Activated CD4-positive, alpha-beta T cell treated with anti-CD3 and anti-CD28 coated beads, Interleukin-2, amount 10 ng/mL, durations not matched to agents 24 days and 14 days (primary cell): ENCODE measurements at regions of chr11 and their contacts with region 1.

Region 1: GRCh38 chr11:3841426-3842350 is 929 bp upstream of the RHOG start:
- DNase-seq: peak; percentile 97
- H3K4me3 Mint-ChIP-seq: peak overlapping the region; percentile 93
- H3K27ac Mint-ChIP-seq: peak overlapping the region; percentile 97
- H3K4me1 Mint-ChIP-seq: peaks cover 55% of the 10 kb centered on the region
- H3K27me3 Mint-ChIP-seq: no peaks in the 10 kb centered on the region

Region 2: DNA sequence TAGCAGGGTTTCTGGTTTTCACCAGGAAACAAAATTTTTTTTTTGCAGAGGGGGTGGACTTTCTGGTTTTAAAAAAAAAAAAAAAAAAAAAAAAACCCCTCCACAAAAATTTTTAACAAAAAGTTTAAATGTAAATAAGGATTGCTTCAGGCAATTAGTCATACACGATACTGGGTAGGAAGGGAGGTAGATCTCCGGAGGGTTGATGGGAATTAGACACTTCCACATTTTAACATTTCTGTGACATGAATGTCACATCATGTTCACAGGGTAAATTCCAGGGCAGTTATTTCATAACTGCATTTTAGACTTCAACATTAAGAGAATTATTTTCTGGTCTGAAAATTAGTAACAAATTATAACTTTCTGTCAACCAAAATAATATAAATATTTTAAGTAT is 60.3 kb before region 1 on chr11:
- intact Hi-C with region 1: loop called (anchors 2 kb)
- DNase-seq: no peak
- H3K4me3 Mint-ChIP-seq: peak overlapping the region; percentile 38
- H3K27ac Mint-ChIP-seq: peak overlapping the region; percentile 71
- H3K4me1 Mint-ChIP-seq: peaks cover 46% of the 10 kb centered on the region
- H3K27me3 Mint-ChIP-seq: no peaks in the 10 kb centered on the region

Region 3: GRCh38 chr11:3797329-3798095 is 44.2 kb before region 1 on chr11 and contains the start of gene NUP98:
- intact Hi-C with region 1: loop called (anchors 1 kb)
- DNase-seq: peak; percentile 100
- H3K4me3 Mint-ChIP-seq: peak within 1 kb of the TSS; percentile 99
- H3K27ac Mint-ChIP-seq: peak within 1 kb of the TSS; percentile 99
- H3K4me1 Mint-ChIP-seq: peaks cover 35% of the 10 kb centered on the region
- H3K27me3 Mint-ChIP-seq: no peaks in the 10 kb centered on the region
- total RNA-seq, gene NUP98: 122 and 129 TPM in 2 replicates

Region 4: GRCh38 chr11:3824714-3825472 is 16.8 kb before region 1 on chr11:
- intact Hi-C with region 1: loop called (anchors 2 kb)
- DNase-seq: peak; percentile 94
- H3K4me3 Mint-ChIP-seq: no peak overlapping the region
- H3K27ac Mint-ChIP-seq: peak overlapping the region; percentile 71
- H3K4me1 Mint-ChIP-seq: peaks cover 27% of the 10 kb centered on the region
- H3K27me3 Mint-ChIP-seq: no peaks in the 10 kb centered on the region

Region 5: DNA sequence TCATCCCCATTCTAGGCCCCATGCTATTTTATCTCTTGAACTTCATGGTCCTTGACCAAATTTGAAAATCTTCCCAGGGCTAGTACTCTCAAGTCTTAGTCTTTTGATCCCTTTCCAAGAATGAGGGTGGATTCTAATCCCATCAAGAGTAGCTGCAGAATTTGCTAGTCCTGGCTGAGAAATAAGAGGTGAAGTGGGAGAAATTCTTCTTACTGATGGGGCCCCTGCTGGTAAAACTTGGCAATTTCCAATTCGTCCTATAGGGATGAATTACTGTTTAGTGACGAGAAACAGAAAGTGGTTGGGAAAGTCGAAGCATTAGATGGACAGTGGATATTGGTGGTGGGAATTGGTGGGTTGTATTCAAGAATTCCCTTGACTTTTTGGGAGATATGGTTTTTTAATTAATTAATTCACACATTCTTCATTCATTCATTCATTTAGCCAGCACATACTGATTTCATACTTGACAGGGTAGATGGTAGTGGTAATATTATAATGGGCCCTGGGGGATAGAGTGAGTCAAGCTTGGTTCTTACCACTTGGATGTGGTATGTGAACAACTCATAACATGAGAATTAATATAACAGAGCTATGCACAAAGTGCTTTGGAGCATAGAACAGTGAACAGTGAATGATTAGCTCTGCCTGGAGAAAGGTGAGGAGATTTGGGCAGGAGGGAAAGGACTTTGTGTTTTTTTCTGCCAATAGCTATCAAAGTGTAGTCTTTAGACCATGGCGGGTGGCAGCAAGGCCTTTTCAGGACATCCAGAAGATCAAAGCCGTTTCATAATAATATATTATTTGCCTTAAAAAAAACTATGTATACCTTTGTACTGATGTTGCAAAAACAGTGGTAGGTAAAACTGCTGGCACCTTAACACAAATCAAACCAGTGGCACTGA is 117.6 kb after region 1 on chr11:
- intact Hi-C with region 1: loop called (anchors 1 kb)
- DNase-seq: no peak
- H3K4me3 Mint-ChIP-seq: no peak overlapping the region
- H3K27ac Mint-ChIP-seq: peak overlapping the region; percentile 67
- H3K4me1 Mint-ChIP-seq: peaks cover 59% of the 10 kb centered on the region
- H3K27me3 Mint-ChIP-seq: no peaks in the 10 kb centered on the region

Region 6: DNA sequence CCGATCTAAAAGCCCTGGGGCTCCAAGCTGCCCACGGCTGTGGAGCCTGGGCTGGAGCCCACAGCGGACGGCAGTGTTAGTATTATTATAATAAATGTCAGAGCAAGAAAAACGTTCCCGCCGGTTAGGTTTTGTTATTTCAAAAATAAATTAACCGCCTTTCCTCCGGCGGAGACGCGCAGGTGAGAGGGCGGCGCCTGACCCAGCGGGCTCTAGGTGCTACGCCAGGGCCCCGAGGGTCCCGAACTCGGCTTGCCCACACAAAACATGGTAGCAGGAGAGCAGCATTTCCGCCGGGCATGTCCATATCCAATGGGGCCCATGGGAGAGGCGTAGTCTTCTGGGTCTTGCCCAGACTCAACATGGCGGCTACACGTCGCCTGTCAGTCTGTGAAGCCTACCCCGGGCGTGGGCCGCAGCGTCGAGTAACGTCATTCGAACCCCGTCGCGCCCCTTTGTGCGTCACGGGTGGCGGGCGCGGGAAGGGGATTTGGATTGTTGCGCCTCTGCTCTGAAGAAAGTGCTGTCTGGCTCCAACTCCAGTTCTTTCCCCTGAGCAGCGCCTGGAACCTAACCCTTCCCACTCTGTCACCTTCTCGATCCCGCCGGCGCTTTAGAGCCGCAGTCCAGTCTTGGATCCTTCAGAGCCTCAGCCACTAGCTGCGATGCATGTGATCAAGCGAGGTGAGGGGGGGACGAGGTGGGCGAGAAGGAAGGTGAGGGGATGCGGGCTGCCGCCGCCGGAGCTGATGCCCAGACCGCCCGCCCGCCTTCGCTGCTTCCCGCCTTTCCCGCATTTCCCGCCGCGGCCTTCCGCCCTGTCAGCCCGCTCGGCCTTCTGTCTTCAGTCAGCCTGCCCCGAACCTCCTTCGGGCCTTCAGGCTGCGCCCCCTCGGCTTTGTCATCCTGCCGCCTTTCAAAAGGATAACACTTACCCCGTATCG is 252.9 kb after region 1 on chr11 and contains the start of gene RRM1:
- intact Hi-C with region 1: loop called (anchors 1 kb)
- DNase-seq: peak; percentile 98
- H3K4me3 Mint-ChIP-seq: peak within 1 kb of the TSS; percentile 98
- H3K27ac Mint-ChIP-seq: peak within 1 kb of the TSS; percentile 97
- H3K4me1 Mint-ChIP-seq: peaks cover 78% of the 10 kb centered on the region
- H3K27me3 Mint-ChIP-seq: no peaks in the 10 kb centered on the region
- total RNA-seq, gene RRM1: 166 and 184 TPM in 2 replicates